ENCODE measurements at regions of chr16 and their contacts with region 1.

Region 1: GRCh38 chr16:83826146-83826913 is 18.6 kb downstream of the HSBP1 start:
- DNase-seq: peak; percentile 72 to 82
- ATAC-seq: peak; percentile 88 to 96
- H3K4me3 ChIP-seq: no peak overlapping the region
- H3K27ac ChIP-seq: 0 out of 6 replicates have a peak overlapping the region, but pooled peaks of 1 of the 2 experiments have one; percentile 31
- H3K4me1 ChIP-seq: peaks cover 3% of the 10 kb centered on the region; the same call in 1 of the 3 replicates
- CTCF ChIP-seq: peak; percentile 89
- EP300 ChIP-seq: no peak
- POLR2A ChIP-seq: no peak
- RAD21 ChIP-seq: peak; percentile 87 to 91

Region 2: GRCh38 chr16:83744441-83744981 is 81.8 kb before region 1 on chr16:
- CTCF ChIA-PET with region 1: no interaction called
- POLR2A ChIA-PET with region 1: no interaction called
- DNase-seq: no peak
- ATAC-seq: peak in 1 of 2 experiments; percentile 52; a peak in 1 of 6 replicates
- H3K4me3 ChIP-seq: no peak overlapping the region
- H3K27ac ChIP-seq: no peak overlapping the region
- H3K4me1 ChIP-seq: no peaks in the 10 kb centered on the region
- CTCF ChIP-seq: no peak
- EP300 ChIP-seq: no peak
- POLR2A ChIP-seq: no peak
- RAD21 ChIP-seq: no peak

Region 3: GRCh38 chr16:83813823-83814658 is 12.3 kb before region 1 on chr16:
- CTCF ChIA-PET with region 1: interaction called, 33 read pairs
- POLR2A ChIA-PET with region 1: no interaction called
- DNase-seq: peak; percentile 34 to 40
- ATAC-seq: peak; percentile 74 to 83
- H3K4me3 ChIP-seq: no peak overlapping the region
- H3K27ac ChIP-seq: no peak overlapping the region
- H3K4me1 ChIP-seq: peaks cover 33% of the 10 kb centered on the region
- CTCF ChIP-seq: no peak
- EP300 ChIP-seq: no peak
- POLR2A ChIP-seq: no peak
- RAD21 ChIP-seq: no peak

Region 4: DNA sequence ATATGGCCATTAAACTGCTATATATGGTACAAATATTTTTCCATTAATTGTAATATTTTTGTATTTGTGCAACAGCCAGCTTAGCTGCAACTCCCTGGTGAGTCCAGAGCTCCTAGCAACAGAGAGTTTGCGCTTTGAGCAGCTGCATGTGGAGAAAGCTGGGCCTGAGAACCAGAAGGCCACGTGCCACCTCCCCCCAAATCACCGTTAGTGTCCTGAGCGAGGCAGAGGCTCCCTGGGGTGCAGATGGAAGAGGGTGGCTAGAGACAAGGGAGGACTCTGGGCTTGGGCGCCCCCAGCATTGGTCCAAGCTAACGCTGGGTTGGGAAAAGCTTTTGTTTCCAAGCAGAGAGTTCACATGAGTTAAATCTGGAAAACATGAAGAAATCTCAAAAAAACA is 23.1 kb after region 1 on chr16:
- CTCF ChIA-PET with region 1: interaction called, 23 read pairs
- POLR2A ChIA-PET with region 1: no interaction called
- DNase-seq: no peak
- ATAC-seq: no peak
- H3K4me3 ChIP-seq: no peak overlapping the region
- H3K27ac ChIP-seq: no peak overlapping the region
- H3K4me1 ChIP-seq: no peaks in the 10 kb centered on the region
- CTCF ChIP-seq: no peak
- EP300 ChIP-seq: no peak
- POLR2A ChIP-seq: no peak
- RAD21 ChIP-seq: no peak

Region 5: DNA sequence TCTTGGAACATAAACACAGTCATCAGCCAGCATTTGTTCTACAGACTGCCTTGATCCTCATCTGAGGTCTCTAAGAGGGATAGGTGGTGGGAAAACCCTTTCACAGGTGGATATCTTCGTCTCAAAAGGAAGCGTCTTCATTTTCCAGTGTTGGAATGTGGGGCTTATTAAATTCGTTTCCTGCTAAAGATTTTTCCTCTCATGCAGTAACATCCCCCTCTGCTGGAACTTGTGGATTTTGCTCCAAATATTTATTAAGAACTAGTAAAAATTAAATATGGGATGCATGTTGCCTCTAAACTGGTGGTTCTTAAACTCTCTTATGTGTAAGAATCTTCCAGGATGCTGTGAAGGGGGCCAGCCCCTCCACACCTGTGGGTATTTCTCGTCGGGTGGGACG is 52.5 kb after region 1 on chr16:
- CTCF ChIA-PET with region 1: interaction called, 74 read pairs
- POLR2A ChIA-PET with region 1: no interaction called
- DNase-seq: peak; percentile 38 to 59
- ATAC-seq: peak; percentile 26 to 66; a peak in 3 of 6 replicates
- H3K4me3 ChIP-seq: no peak overlapping the region
- H3K27ac ChIP-seq: no peak overlapping the region
- H3K4me1 ChIP-seq: no peaks in the 10 kb centered on the region
- CTCF ChIP-seq: peak; percentile 68
- EP300 ChIP-seq: no peak
- POLR2A ChIP-seq: no peak
- RAD21 ChIP-seq: peak; percentile 77 to 87

Region 6: GRCh38 chr16:83887081-83887480 is 60.8 kb after region 1 on chr16:
- CTCF ChIA-PET with region 1: interaction called, 74 read pairs
- POLR2A ChIA-PET with region 1: no interaction called
- DNase-seq: peak; percentile 46 to 53
- ATAC-seq: peak in 1 of 2 experiments; percentile 75; a peak in 4 of 6 replicates
- H3K4me3 ChIP-seq: no peak overlapping the region
- H3K27ac ChIP-seq: no peak overlapping the region
- H3K4me1 ChIP-seq: no peaks in the 10 kb centered on the region
- CTCF ChIP-seq: peak; percentile 46
- EP300 ChIP-seq: no peak
- POLR2A ChIP-seq: no peak
- RAD21 ChIP-seq: peak; percentile 46 to 59

Region 7: GRCh38 chr16:83898463-83899271 is 72.3 kb after region 1 on chr16 and contains the start of gene MLYCD:
- CTCF ChIA-PET with region 1: interaction called, 10 read pairs
- POLR2A ChIA-PET with region 1: no interaction called
- DNase-seq: peak; percentile 55 to 86
- ATAC-seq: peak; percentile 93 to 94
- H3K4me3 ChIP-seq: peak within 1 kb of the TSS; percentile 63
- H3K27ac ChIP-seq: peak within 1 kb of the TSS; percentile 64 to 93
- H3K4me1 ChIP-seq: peaks cover 8% of the 10 kb centered on the region; the same call in 2 of the 3 replicates
- CTCF ChIP-seq: no peak
- EP300 ChIP-seq: no peak
- POLR2A ChIP-seq: peak; percentile 31
- RAD21 ChIP-seq: no peak
- polyA plus RNA-seq, gene MLYCD: 1.7 and 2.1 TPM in 2 replicates

Region 8: GRCh38 chr16:83913245-83913633 is 86.9 kb after region 1 on chr16:
- CTCF ChIA-PET with region 1: interaction called, 10 read pairs
- POLR2A ChIA-PET with region 1: no interaction called
- DNase-seq: no peak
- ATAC-seq: no peak
- H3K4me3 ChIP-seq: no peak overlapping the region
- H3K27ac ChIP-seq: no peak overlapping the region
- H3K4me1 ChIP-seq: no peaks in the 10 kb centered on the region
- CTCF ChIP-seq: no peak
- EP300 ChIP-seq: no peak
- POLR2A ChIP-seq: no peak
- RAD21 ChIP-seq: no peak

Measured in A549 (cell line).